ENCODE measurements at regions of chr3 and their contacts with region 1.

Region 1: GRCh38 chr3:20039766-20040475 is at the start of gene KAT2B:
- DNase-seq: peak; percentile 82 to 84
- ATAC-seq: peak; percentile 66 to 89 (median 80)
- H3K4me3 ChIP-seq: peak within 1 kb of the TSS; percentile 53 to 95 (median 86)
- H3K27ac ChIP-seq: peak within 1 kb of the TSS; percentile 87 to 99 (median 98)
- H3K4me1 ChIP-seq: peaks cover 11 to 52% (median 45%) of the 10 kb centered on the region in 9 donors
- H3K27me3 ChIP-seq: no peaks in the 10 kb centered on the region
- CTCF ChIP-seq: peak; percentile 53 to 85 (median 72)
- total RNA-seq, gene KAT2B: 81.7 to 104 (median 87.8) TPM

Region 2: GRCh38 chr3:19946832-19947548 is 92.9 kb before region 1 on chr3 and contains the start of gene RAB5A:
- intact Hi-C with region 1: loop called in 8 of 10 experiments (anchors 1 to 10 kb)
- DNase-seq: peak; percentile 96 to 98
- ATAC-seq: peak; percentile 97 to 99 (median 98)
- H3K4me3 ChIP-seq: peak within 1 kb of the TSS; percentile 79 to 99 (median 98)
- H3K27ac ChIP-seq: peak within 1 kb of the TSS; percentile 89 to 99 (median 98)
- H3K4me1 ChIP-seq: peaks cover 0 to 44% (median 35%) of the 10 kb centered on the region in 9 donors
- H3K27me3 ChIP-seq: no peaks in the 10 kb centered on the region
- CTCF ChIP-seq: peak in 1 of 9 donors; percentile 1
- total RNA-seq, gene RAB5A: 52.2 to 80.9 (median 66.9) TPM

Region 3: GRCh38 chr3:19994796-19995195 is 45.1 kb before region 1 on chr3:
- intact Hi-C with region 1: loop called in 1 of 10 experiments (anchors 10 kb)
- DNase-seq: no peak
- ATAC-seq: no peak
- H3K4me3 ChIP-seq: no peak overlapping the region
- H3K27ac ChIP-seq: no peak overlapping the region
- H3K4me1 ChIP-seq: no peaks in the 10 kb centered on the region
- H3K27me3 ChIP-seq: no peaks in the 10 kb centered on the region
- CTCF ChIP-seq: no peak

Region 4: DNA sequence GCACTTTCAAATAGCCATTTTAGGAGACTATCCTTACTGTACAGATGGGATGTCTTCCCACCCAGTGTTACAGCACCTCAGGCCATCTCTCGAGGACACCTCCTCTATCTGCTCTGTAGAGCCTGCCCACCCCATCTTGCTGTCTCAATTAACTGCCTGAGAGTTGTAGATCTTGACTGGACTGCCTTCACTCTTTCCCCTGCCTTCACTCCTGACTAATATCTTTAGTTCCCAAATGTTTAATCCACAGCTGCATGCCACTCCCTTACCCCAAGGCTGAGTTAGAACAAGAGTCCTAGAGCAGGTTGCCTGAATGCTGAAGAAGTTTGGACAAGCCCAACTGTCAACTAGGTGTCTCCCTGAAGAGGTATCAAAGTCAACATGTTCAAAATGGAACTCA is 26.5 kb before region 1 on chr3:
- intact Hi-C with region 1: no loop called
- DNase-seq: no peak
- ATAC-seq: no peak
- H3K4me3 ChIP-seq: no peak overlapping the region
- H3K27ac ChIP-seq: no peak overlapping the region
- H3K4me1 ChIP-seq: no peaks in the 10 kb centered on the region
- H3K27me3 ChIP-seq: no peaks in the 10 kb centered on the region
- CTCF ChIP-seq: no peak

Region 5: GRCh38 chr3:20104167-20104661 is 64.3 kb after region 1 on chr3:
- intact Hi-C with region 1: loop called in 1 of 10 experiments (anchors 10 kb)
- DNase-seq: no peak
- ATAC-seq: peak in 1 of 8 donors; percentile 11
- H3K4me3 ChIP-seq: no peak overlapping the region
- H3K27ac ChIP-seq: peak overlapping the region in 1 of 10 donors; percentile 41
- H3K4me1 ChIP-seq: peaks cover 0 to 22% (median 0%) of the 10 kb centered on the region in 9 donors
- H3K27me3 ChIP-seq: no peaks in the 10 kb centered on the region
- CTCF ChIP-seq: no peak

Region 6: GRCh38 chr3:20185701-20186598 is 146.0 kb after region 1 on chr3 and contains the start of gene SGO1:
- intact Hi-C with region 1: loop called in 5 of 10 experiments (anchors 5 to 10 kb)
- DNase-seq: peak; percentile 99
- ATAC-seq: peak; percentile 100
- H3K4me3 ChIP-seq: peak within 1 kb of the TSS; percentile 37 to 83 (median 68)
- H3K27ac ChIP-seq: peak within 1 kb of the TSS; percentile 75 to 97 (median 92)
- H3K4me1 ChIP-seq: peaks cover 0 to 22% (median 16%) of the 10 kb centered on the region in 9 donors
- H3K27me3 ChIP-seq: no peaks in the 10 kb centered on the region
- CTCF ChIP-seq: peak in 2 of 9 donors; percentile 22 to 26
- total RNA-seq, gene SGO1: 0.25 to 2.2 (median 0.50) TPM in 6 of 10 donors, not detected in the others